ENCODE measurements at regions of chr22 and their contacts with region 1.

Region 1: GRCh38 chr22:37623075-37624016 is 14.7 kb downstream of the GGA1 start:
- DNase-seq: no peak

Region 2: GRCh38 chr22:37457093-37457893 is 166.1 kb before region 1 on chr22:
- intact Hi-C with region 1: no loop called
- DNase-seq: peak; percentile 88

Region 3: DNA sequence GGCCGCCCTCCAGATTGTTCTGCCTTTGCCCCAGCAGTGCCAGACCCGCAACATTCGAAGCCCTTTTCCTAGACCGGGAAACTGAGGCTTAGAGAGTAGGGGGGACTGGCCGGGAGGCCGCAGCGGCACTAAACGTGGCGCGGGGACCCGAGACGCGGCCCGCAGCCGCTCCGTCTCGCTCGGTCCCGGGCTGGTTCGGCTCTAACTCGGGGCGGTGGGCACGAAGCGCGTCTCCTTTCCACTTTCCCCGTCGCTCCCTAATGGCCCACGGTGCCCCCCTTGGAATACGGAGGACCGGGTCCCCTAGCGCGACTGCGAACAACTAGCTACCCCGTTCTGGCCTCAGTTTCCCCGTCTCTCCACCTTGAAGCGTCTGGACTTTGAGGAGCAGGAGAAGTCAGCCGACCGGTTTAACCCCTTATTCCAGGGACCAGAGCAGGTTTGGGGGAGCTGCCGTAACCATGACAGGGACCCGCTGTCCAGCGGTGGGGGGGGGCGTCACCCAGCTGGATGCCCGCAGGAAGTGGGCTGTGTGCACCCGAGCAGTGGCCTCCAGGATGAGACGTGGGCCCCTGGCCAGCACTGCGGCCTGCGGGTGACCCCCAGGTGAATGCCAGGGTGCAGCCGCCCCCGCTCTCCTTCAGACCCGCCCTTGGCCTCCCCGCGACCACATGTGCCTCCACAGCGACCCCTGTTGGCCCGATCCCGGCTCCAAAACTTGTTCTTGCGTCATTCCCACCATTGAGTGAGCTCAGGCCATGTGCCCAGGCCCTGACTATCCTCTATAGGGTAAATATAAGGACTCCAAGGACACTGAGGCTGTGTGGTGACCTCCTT is 61.9 kb before region 1 on chr22:
- intact Hi-C with region 1: loop called in 1 of 2 experiments (anchors 2 kb)
- DNase-seq: peak; percentile 98

Region 4: DNA sequence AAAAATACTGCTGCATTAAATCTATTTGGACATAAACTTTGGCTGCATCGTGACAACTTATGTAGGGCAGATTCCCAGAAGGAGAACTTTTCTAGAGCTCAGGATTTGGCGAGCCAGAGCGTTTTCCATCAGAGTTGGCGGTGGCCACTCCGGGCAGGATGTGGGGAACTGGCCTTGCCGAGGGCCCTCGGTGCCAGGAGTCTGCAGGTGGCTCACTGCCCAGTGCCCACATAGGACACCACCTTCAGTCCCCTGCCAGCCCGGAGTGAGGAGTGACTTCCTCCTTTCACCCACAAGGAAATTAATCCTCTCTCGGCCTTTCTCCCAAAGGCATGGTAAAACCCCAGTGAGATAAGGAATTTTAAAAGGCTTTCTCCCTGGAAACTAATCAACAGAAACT is 41.8 kb before region 1 on chr22:
- intact Hi-C with region 1: no loop called
- DNase-seq: no peak

Region 5: DNA sequence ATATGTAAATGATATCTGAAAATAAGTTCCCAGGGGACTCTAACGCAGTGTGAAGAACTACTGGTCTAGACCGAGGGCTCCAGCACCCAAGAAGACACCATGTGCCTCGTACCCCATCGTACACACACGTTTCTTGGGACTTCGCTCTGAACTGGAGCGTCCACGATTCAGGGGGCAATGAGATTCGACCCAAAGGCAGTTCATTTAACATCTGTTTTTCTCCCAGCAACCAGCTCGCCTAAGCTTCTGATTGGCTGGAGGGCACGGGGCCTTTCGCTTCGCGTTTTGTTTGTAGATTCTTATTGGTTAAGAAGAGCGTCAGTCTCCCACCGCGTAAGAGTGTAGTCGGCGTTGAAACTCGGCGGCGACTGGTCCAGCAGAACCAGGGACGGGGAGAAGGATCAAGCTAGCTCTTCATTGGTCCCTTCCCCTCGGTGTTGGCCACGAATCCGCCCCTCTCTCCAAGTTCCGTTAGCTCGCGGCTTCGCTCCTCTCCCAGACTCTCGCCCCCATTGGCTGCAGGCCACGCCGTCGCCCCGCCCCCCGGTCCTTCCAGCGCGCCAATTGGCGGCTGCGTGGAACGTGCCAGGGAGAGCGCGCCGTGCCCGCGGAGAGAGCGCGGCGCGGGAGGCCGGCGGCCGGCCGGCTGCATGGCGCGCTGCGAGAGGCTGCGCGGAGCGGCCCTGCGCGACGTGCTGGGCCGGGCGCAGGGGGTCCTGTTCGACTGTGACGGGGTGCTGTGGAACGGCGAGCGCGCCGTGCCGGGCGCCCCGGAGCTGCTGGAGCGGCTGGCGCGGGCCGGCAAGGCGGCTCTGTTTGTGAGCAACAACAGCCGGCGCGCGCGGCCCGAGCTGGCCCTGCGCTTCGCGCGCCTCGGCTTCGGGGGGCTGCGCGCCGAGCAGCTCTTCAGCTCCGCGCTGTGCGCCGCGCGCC is 35.1 kb after region 1 on chr22 and contains the start of gene PDXP:
- intact Hi-C with region 1: no loop called
- DNase-seq: peak; percentile 100
- total RNA-seq, gene PDXP: 5.0 to 5.4 TPM

Region 6: DNA sequence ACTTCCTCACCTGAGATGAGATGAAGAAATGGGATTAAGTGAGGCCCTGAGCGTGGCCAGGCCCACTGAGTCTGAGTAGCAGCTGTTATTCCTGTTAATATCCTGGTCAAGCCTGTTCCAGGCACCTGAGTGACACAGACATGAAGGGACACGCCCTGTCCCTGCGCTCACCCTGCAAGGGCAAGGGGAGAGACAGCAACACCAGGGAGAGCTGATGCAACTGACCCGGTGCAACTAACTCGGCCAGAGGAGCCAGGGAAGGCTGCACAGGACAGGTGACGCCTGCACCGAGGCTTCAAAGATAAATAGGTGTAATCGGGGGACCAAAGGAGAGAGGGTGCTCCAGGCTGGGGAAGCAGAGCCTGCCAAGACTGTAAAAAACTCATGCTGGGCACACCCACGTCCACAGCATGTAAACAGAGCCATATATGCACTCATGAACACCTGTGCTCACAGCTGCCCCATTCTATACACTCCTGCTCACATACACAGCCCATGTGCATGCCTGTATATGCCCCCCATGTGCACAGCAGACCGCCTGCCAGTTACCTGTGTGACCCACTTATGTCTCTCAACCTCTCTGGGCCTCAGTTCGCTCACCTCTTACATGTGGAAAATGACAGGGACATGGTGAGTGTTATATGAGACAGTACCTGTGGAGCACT is 161.6 kb after region 1 on chr22:
- intact Hi-C with region 1: loop called in 1 of 2 experiments (anchors 2 kb)
- DNase-seq: no peak

Region 7: GRCh38 chr22:37849089-37849751 is 225.9 kb after region 1 on chr22 and contains the start of gene EIF3L:
- intact Hi-C with region 1: no loop called
- DNase-seq: peak; percentile 97
- total RNA-seq, gene EIF3L: 260 to 267 TPM